Activated CD8-positive, alpha-beta memory T cell treated with anti-CD3 and anti-CD28 coated beads, Interleukin-2, amount 10 ng/mL, durations not matched to agents 7 days and 5 days (primary cell): ENCODE measurements at regions of chr3 and their contacts with region 1.

Region 1: GRCh38 chr3:8324740-8325139 is 176.9 kb upstream of the LMCD1 start:
- DNase-seq: peak; percentile 50
- ATAC-seq: peak; percentile 69
- H3K4me3 Mint-ChIP-seq: no peak overlapping the region
- H3K27ac Mint-ChIP-seq: no peak overlapping the region
- H3K4me1 Mint-ChIP-seq: no peaks in the 10 kb centered on the region
- H3K27me3 Mint-ChIP-seq: peaks cover 3% of the 10 kb centered on the region

Region 2: GRCh38 chr3:8416965-8417364 is 92.2 kb after region 1 on chr3:
- CTCF ChIA-PET with region 1: interaction called, 67 read pairs
- DNase-seq: no peak
- ATAC-seq: no peak
- H3K4me3 Mint-ChIP-seq: no peak overlapping the region
- H3K27ac Mint-ChIP-seq: peak overlapping the region; percentile 63
- H3K4me1 Mint-ChIP-seq: no peaks in the 10 kb centered on the region
- H3K27me3 Mint-ChIP-seq: no peaks in the 10 kb centered on the region